ENCODE measurements at regions of chr14 and their contacts with region 1.

Region 1: DNA sequence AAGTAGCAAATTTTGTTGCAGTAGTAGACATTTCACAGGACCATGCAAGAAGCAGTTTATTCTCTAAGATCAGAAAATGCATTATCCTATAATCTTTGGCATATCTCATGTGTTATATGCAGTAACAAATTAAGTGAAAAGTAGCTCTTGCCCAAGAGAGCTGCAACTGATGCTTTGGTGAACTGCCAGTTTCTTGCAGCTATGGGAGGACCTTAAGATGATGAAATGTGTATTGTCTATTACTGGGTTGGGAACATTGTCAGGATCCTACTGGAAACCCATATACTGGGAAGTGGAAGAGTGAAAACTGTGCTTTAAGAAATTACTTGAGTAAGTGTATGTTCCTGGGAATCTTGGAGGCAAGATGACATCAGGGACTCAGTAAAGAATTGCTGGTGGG is 238.8 kb downstream of the DACT1 start:
- DNase-seq: no peak
- ATAC-seq: no peak
- H3K4me3 ChIP-seq: no peak overlapping the region
- H3K27ac ChIP-seq: no peak overlapping the region
- H3K4me1 ChIP-seq: no peaks in the 10 kb centered on the region
- H3K27me3 ChIP-seq: no peaks in the 10 kb centered on the region
- CTCF ChIP-seq: no peak
- EP300 ChIP-seq: no peak
- POLR2A ChIP-seq: no peak
- RAD21 ChIP-seq: no peak

Region 2: DNA sequence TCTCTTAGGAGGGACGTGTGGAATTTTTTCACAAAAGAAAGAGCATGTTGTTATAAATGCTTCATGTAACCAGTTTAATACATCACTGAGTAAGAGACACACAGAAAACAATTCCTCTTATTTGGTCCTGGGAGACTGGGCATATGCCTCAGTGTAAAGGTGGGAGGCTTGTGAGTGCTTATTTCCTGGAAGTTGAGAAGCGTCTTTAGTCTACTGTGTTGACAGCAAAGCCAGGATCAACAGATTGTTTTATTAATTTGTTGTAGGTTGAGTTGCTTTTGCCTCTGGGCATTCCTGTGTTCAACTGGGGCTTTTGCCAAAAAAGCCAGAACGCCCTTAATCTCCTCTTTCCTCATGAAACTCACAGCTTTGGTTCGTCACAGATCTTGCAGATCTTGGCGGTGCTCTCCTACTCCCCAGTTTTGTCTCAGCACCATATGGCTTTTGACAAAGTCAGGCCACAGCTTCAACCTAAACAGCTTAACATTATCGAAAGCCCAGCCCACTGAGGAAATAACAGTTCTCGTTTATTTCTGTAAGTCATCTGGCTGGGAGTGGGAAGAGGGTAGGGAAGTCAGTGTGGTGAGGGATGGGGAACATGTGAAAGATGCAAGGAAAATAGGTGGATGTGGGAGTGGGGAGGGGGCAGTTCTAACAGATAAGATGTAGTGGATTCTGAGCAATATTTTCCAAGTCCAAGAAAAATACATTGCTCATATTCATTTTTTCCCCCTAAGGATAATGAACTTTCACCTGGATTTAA is 11.7 kb before region 1 on chr14:
- CTCF ChIA-PET with region 1: interaction called, 4 read pairs
- POLR2A ChIA-PET with region 1: no interaction called
- RAD21 ChIA-PET with region 1: no interaction called
- SMC1A ChIA-PET with region 1: interaction called, 22 read pairs
- in situ Hi-C with region 1: no loop called
- intact Hi-C with region 1: no loop called
- DNase-seq: no peak
- ATAC-seq: no peak
- H3K4me3 ChIP-seq: no peak overlapping the region
- H3K27ac ChIP-seq: no peak overlapping the region
- H3K4me1 ChIP-seq: no peaks in the 10 kb centered on the region
- H3K27me3 ChIP-seq: no peaks in the 10 kb centered on the region
- CTCF ChIP-seq: no peak
- EP300 ChIP-seq: no peak
- POLR2A ChIP-seq: no peak
- RAD21 ChIP-seq: no peak